T-cell (primary cell): ENCODE measurements at regions of chr1 and their contacts with region 1.

Region 1: DNA sequence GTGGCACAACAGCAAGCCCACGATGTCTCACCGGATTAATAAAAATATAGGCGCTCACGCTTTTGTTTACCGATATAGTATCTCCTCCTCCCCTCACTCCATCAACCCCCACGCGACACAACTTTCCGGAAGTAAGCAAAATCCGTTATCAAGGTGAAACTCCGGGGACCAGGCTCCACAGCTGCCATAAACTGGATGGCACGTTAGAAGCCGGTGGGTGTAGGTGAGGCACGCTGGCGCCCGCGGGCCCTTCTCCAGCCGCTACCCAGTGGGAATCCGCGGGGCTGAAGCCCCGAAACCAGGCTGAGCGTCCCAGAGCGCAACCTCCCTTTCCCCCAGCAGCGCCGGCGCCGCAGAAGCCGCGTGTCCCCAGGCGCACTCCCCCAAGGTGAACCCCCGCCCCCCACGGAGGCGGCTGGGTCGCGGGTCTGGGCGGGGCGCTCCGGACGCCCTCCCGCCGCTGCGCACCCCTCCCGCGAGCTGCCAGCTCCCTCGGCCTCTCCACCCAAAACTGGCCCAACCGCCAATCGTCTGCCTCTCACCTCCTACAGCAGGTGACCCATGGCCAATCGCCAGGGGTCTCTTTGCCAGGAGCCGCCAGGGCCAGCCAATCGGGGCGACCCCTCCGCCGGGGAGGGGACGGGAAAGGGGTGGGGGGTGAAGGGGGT is 112.4 kb downstream of the OSBPL9 start:
- DNase-seq: peak; percentile 77 to 94 (median 89)
- ATAC-seq: peak; percentile 93 to 96 (median 94)
- H3K4me3 ChIP-seq: peak overlapping the region; percentile 81
- H3K4me3 Mint-ChIP-seq: peak overlapping the region; percentile 87 to 93 (median 92)
- H3K27ac ChIP-seq: peak overlapping the region; percentile 79
- H3K27ac Mint-ChIP-seq: peak overlapping the region; percentile 89 to 90
- H3K4me1 ChIP-seq: peaks cover 8 to 16% of the 10 kb centered on the region in 2 experiments
- H3K4me1 Mint-ChIP-seq: peaks cover 50 to 54% (median 52%) of the 10 kb centered on the region in 3 donors
- H3K27me3 ChIP-seq: no peaks in the 10 kb centered on the region
- H3K27me3 Mint-ChIP-seq: no peaks in the 10 kb centered on the region

Region 2: DNA sequence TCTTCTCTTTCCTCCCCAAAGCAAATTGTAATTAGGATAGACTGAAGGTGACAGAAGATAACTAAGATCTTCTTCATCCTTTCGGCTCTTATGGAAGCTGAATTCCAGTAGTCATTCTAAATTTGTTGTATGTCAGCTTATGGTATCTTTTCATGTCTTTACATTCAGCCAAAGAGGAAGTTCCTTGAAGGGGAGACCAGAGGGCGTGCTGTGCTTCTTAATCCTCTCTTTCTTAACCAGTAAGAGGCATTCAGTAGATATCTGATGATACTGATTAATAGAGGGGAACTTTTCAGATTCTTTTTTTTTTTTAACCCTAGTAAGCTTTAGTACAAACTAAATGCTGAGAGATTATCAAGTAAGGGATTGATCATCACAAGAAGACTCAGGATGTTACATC is 10.1 kb before region 1 on chr1:
- CTCF ChIA-PET with region 1: no interaction called
- POLR2A ChIA-PET with region 1: interaction called, 10 to 13 read pairs
- DNase-seq: no peak
- ATAC-seq: no peak
- H3K4me3 ChIP-seq: no peak overlapping the region
- H3K4me3 Mint-ChIP-seq: no peak overlapping the region
- H3K27ac ChIP-seq: no peak overlapping the region
- H3K27ac Mint-ChIP-seq: no peak overlapping the region
- H3K4me1 ChIP-seq: no peaks in the 10 kb centered on the region
- H3K4me1 Mint-ChIP-seq: peaks cover 8 to 15% (median 8%) of the 10 kb centered on the region in 3 donors
- H3K27me3 ChIP-seq: no peaks in the 10 kb centered on the region
- H3K27me3 Mint-ChIP-seq: no peaks in the 10 kb centered on the region